ENCODE measurements at regions of chr12 and their contacts with region 1.

Region 1: DNA sequence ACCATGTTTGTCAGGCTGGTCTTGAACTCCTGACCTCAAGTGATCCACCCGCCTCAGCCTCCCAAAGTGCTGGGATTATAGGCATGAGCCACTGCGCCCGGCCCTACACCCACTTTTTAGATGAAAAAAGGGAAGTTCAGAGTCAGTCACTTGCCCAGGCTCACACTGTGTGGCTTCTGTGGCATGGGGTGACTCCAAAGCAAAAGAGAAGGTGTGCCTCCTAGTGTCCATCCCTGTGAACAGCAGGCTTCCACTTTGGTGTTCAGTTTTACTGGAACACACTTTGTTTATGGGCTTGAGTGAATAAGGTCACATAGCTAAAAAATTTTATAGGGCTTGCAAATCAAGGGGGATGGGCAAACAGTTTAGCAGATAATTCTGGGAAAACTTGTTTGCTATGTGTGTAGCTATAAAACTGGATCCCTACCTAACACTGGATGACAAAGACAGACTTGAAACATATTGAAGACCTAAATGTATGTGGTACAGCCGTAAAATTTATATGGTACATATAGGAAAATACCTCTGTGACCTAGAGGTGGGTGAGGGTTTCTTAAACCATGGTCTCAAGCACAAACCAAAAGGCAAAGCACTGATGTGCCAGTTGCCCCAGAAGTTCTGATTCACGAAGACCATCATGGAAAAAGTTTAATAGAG is 54.9 kb downstream of the EID3 start:
- DNase-seq: peak in 5 of 6 donors; percentile 38 to 70 (median 52)
- ATAC-seq: peak; percentile 79 to 96 (median 92)
- H3K4me3 ChIP-seq: no peak overlapping the region
- H3K27ac ChIP-seq: no peak overlapping the region
- H3K4me1 ChIP-seq: no peaks in the 10 kb centered on the region
- H3K27me3 ChIP-seq: no peaks in the 10 kb centered on the region
- CTCF ChIP-seq: peak; percentile 41 to 77 (median 75)

Region 2: DNA sequence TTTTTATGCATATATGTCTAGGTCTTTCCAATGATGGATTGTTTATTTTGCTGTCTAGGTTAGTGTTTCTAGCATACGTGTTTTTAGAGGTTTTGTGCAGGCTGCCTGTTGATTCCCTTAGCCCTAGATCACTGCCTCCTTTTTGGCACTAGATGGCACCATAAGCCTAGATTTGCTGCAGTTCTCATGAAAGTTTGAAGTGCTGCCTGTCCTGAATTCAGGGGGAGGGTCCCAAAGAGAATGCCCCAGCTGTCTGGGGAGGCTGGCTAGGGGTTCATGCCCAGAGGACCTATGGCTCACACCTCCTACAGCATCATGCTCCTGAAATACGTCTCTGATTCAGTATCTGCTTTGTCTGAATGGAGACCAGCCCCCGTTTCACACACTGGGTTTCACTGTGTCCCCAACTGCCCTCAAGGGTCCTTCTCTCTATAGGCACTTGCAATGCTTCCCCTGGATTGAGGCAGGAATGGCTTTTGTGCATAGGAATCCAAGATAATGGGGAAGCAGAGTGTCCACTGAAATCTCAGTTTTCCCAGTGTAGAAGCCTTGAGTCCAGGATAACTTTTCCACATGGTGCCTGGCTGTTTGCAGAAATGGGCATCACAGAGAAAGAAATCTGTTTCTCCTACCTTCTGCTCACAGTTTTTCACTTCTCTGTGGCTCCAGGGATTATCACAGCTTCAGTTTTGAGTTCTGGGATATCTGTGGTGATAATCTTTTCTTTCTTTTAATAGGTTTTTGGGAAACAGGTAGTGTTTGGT is 157.1 kb before region 1 on chr12:
- intact Hi-C with region 1: loop called (anchors 5 to 10 kb)
- DNase-seq: peak in 2 of 6 donors; percentile 37 to 59
- ATAC-seq: peak; percentile 69 to 94 (median 91)
- H3K4me3 ChIP-seq: no peak overlapping the region
- H3K27ac ChIP-seq: no peak overlapping the region
- H3K4me1 ChIP-seq: no peaks in the 10 kb centered on the region
- H3K27me3 ChIP-seq: no peaks in the 10 kb centered on the region
- CTCF ChIP-seq: peak; percentile 54 to 82 (median 68)

Region 3: GRCh38 chr12:104207416-104208210 is 150.9 kb before region 1 on chr12:
- intact Hi-C with region 1: loop called (anchors 5 to 10 kb)
- DNase-seq: no peak
- ATAC-seq: no peak
- H3K4me3 ChIP-seq: no peak overlapping the region
- H3K27ac ChIP-seq: no peak overlapping the region
- H3K4me1 ChIP-seq: no peaks in the 10 kb centered on the region
- H3K27me3 ChIP-seq: no peaks in the 10 kb centered on the region
- CTCF ChIP-seq: no peak

Region 4: GRCh38 chr12:104399740-104400612 is 41.5 kb after region 1 on chr12:
- intact Hi-C with region 1: no loop called
- DNase-seq: no peak
- ATAC-seq: no peak
- H3K4me3 ChIP-seq: no peak overlapping the region
- H3K27ac ChIP-seq: no peak overlapping the region
- H3K4me1 ChIP-seq: no peaks in the 10 kb centered on the region
- H3K27me3 ChIP-seq: no peaks in the 10 kb centered on the region
- CTCF ChIP-seq: no peak